Breast epithelium (tissue), 4 donors: ENCODE measurements at regions of chr10 and their contacts with region 1.

Region 1: GRCh38 chr10:69371281-69371680 is 45.4 kb downstream of the TACR2 start:
- DNase-seq: no peak
- H3K4me3 ChIP-seq: no peak overlapping the region
- H3K27ac ChIP-seq: no peak overlapping the region
- H3K4me1 ChIP-seq: peaks cover 3 to 13% of the 10 kb centered on the region in 2 donors
- H3K27me3 ChIP-seq: no peaks in the 10 kb centered on the region
- CTCF ChIP-seq: no peak
- POLR2A ChIP-seq: no peak

Region 2: DNA sequence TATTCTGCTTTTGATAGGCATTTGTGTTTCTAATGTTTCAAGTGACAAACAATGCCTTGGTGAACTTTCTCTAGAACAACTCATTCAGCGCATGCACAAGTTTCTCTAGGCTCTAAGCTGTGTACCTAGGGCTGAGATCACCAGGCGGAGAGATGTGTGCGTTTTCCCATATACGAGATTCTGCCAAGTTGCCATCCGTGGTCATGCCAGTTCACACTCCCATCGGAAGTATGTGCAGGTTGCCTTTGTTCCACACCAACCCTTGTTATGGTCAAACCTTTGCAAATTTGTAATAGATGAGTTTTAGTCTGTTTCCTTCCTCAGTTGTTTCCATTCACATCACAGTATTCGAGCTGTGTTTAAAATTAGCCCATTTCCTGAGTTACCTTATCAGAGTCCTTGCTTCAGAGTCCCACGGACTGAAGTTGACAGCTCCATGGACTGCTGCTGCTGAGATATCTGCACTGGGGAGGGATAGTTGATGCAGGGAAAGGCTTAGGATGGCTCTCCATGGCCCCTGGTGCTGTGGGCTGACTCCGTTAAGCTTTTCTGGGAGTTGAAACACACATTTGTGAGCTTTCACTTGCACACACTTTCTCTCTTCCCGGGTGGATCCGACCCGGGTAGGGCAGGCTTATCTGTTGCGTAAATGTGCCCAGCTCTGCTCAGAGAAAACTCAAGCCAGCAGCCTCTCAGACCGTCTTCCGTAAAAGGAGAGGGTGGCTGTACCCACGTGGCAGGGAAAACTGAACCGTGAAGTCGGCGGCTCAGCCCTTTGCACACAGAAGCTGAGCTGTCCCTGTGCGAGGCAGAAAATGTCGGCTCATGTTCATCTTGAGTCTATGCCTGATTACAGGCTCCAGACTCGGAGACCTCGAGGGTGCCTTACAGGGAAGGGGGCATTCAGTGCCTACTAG is 43.6 kb before region 1 on chr10:
- intact Hi-C with region 1: loop called (anchors 1 kb)
- DNase-seq: peak; percentile 71 to 75
- H3K4me3 ChIP-seq: peak overlapping the region in 2 of 3 donors; percentile 4 to 52
- H3K27ac ChIP-seq: peak overlapping the region; percentile 88 to 90
- H3K4me1 ChIP-seq: peaks cover 2 to 22% of the 10 kb centered on the region in 2 donors
- H3K27me3 ChIP-seq: no peaks in the 10 kb centered on the region
- CTCF ChIP-seq: no peak
- POLR2A ChIP-seq: no peak